T-cell (primary cell): ENCODE measurements at regions of chr21 and their contacts with region 1.

Region 1: GRCh38 chr21:37665230-37666024 is 250.8 kb downstream of the KCNJ6 start:
- DNase-seq: no peak
- ATAC-seq: no peak
- H3K4me3 ChIP-seq: no peak overlapping the region
- H3K4me3 Mint-ChIP-seq: no peak overlapping the region
- H3K27ac ChIP-seq: no peak overlapping the region
- H3K27ac Mint-ChIP-seq: no peak overlapping the region
- H3K4me1 ChIP-seq: no peaks in the 10 kb centered on the region
- H3K4me1 Mint-ChIP-seq: no peaks in the 10 kb centered on the region
- H3K27me3 ChIP-seq: peaks cover 0 to 10% of the 10 kb centered on the region in 2 experiments
- H3K27me3 Mint-ChIP-seq: no peaks in the 10 kb centered on the region

Region 2: GRCh38 chr21:37654596-37654995 is 10.8 kb before region 1 on chr21:
- CTCF ChIA-PET with region 1: no interaction called
- POLR2A ChIA-PET with region 1: no interaction called
- DNase-seq: no peak
- ATAC-seq: no peak
- H3K4me3 ChIP-seq: no peak overlapping the region
- H3K4me3 Mint-ChIP-seq: no peak overlapping the region
- H3K27ac ChIP-seq: no peak overlapping the region
- H3K27ac Mint-ChIP-seq: no peak overlapping the region
- H3K4me1 ChIP-seq: no peaks in the 10 kb centered on the region
- H3K4me1 Mint-ChIP-seq: no peaks in the 10 kb centered on the region
- H3K27me3 ChIP-seq: peaks cover 0 to 31% of the 10 kb centered on the region in 2 experiments
- H3K27me3 Mint-ChIP-seq: peaks cover 7 to 27% of the 10 kb centered on the region in 2 donors

Region 3: DNA sequence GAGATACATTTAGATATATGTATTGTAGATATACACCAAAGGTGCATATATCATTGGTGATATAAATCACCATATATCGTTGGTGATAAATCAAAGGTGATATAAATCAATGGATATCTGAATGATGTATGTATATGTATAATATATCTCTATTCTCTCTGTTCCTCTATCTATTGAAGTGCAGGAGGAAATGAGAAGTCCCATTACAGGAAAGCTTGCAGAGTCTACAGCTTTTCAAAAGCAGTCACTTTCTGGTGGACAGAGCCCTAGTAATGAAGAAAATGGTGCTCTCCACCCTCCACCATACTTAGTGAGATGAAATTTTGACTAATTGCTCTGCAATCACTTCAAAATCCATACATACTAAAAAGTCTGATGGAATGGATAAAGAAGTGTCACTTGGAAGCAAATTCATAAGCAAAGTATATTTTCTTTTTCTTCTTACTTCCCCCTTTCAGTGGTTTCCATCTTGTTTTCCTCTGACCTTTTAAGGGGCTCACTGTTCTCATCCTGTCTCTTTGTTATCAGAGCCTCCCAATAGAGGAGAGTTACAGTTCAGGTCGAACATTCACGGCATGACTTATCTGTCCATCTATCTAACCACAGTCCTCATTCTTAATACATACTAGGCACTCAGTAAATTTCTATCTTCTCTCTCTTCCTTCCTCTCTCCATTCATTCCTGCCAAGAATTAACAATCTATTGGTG is 23.7 kb after region 1 on chr21:
- CTCF ChIA-PET with region 1: interaction called in 1 of 2 experiments, 10 read pairs
- POLR2A ChIA-PET with region 1: no interaction called
- DNase-seq: no peak
- ATAC-seq: no peak
- H3K4me3 ChIP-seq: no peak overlapping the region
- H3K4me3 Mint-ChIP-seq: no peak overlapping the region
- H3K27ac ChIP-seq: no peak overlapping the region
- H3K27ac Mint-ChIP-seq: no peak overlapping the region
- H3K4me1 ChIP-seq: no peaks in the 10 kb centered on the region
- H3K4me1 Mint-ChIP-seq: no peaks in the 10 kb centered on the region
- H3K27me3 ChIP-seq: peaks cover 0 to 3% of the 10 kb centered on the region in 2 experiments
- H3K27me3 Mint-ChIP-seq: peaks cover 7 to 15% of the 10 kb centered on the region in 2 donors